ENCODE measurements at regions of chr4 and their contacts with region 1.

Region 1: DNA sequence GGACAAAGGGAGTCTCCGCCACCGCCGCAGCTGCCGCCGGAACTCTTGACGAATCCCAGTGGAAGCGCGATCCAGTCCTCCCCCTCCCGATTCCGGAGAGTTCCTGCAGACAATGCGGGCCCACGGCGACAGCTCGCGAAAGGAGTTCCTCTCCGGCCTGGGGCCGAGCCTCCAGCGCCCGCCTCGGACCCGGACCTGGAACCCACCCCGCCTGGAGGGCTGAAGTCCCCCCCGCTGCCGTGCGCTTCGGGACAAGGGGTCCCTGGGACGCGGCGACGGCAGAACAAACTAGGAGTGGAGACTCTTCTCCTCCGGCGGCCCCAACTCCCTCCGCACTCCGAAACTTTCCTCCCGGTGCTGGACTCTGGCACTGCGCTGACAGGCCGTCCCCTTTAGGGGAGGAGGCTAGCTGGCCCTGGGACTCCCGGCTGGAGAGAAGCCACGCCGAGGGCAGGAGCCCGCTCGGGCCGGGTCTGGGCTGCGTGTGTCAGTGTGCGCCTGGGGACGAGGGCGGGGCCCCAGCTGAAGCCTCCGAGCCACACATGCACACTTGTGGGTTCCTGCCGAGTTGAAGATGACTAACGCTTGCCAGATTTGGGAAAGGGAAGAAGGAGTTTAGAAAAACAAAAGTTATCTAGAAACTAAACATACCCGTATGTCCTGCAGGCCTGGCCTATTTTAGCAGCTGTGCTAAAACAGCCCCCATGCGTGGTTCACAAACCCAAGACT is at the start of gene ANTXR2:
- DNase-seq: peak; percentile 79
- H3K4me3 Mint-ChIP-seq: peak within 1 kb of the TSS; percentile 88
- H3K27ac Mint-ChIP-seq: peak within 1 kb of the TSS; percentile 81
- H3K4me1 Mint-ChIP-seq: peaks cover 72% of the 10 kb centered on the region
- H3K27me3 Mint-ChIP-seq: no peaks in the 10 kb centered on the region
- total RNA-seq, gene ANTXR2: 12.6 to 14.4 TPM

Region 2: GRCh38 chr4:79528241-79528706 is 544.6 kb before region 1 on chr4:
- CTCF ChIA-PET with region 1: no interaction called
- POLR2A ChIA-PET with region 1: no interaction called
- intact Hi-C with region 1: loop called (anchors 10 kb)
- DNase-seq: peak; percentile 9
- H3K4me3 Mint-ChIP-seq: no peak overlapping the region
- H3K27ac Mint-ChIP-seq: no peak overlapping the region
- H3K4me1 Mint-ChIP-seq: peaks cover 7% of the 10 kb centered on the region
- H3K27me3 Mint-ChIP-seq: peaks cover 6% of the 10 kb centered on the region

Region 3: GRCh38 chr4:80007745-80008149 is 65.2 kb before region 1 on chr4:
- CTCF ChIA-PET with region 1: interaction called, 3 read pairs
- POLR2A ChIA-PET with region 1: interaction called, 6 read pairs
- intact Hi-C with region 1: loop called (anchors 1 kb)
- DNase-seq: no peak
- H3K4me3 Mint-ChIP-seq: peak overlapping the region; percentile 20
- H3K27ac Mint-ChIP-seq: peak overlapping the region; percentile 87
- H3K4me1 Mint-ChIP-seq: peaks cover 64% of the 10 kb centered on the region
- H3K27me3 Mint-ChIP-seq: no peaks in the 10 kb centered on the region

Region 4: GRCh38 chr4:80125252-80126177 is 52.6 kb after region 1 on chr4:
- CTCF ChIA-PET with region 1: interaction called, 7 read pairs
- POLR2A ChIA-PET with region 1: interaction called, 9 read pairs
- intact Hi-C with region 1: loop called (anchors 1 kb)
- DNase-seq: peak; percentile 31
- H3K4me3 Mint-ChIP-seq: peak overlapping the region; percentile 28
- H3K27ac Mint-ChIP-seq: peak overlapping the region; percentile 70
- H3K4me1 Mint-ChIP-seq: peaks cover 49% of the 10 kb centered on the region
- H3K27me3 Mint-ChIP-seq: no peaks in the 10 kb centered on the region

Region 5: GRCh38 chr4:80173401-80173800 is 100.5 kb after region 1 on chr4:
- CTCF ChIA-PET with region 1: interaction called, 7 read pairs
- POLR2A ChIA-PET with region 1: interaction called, 9 read pairs
- intact Hi-C with region 1: loop called (anchors 1 kb)
- DNase-seq: peak; percentile 71
- H3K4me3 Mint-ChIP-seq: peak overlapping the region; percentile 18
- H3K27ac Mint-ChIP-seq: peak overlapping the region; percentile 81
- H3K4me1 Mint-ChIP-seq: peaks cover 55% of the 10 kb centered on the region
- H3K27me3 Mint-ChIP-seq: no peaks in the 10 kb centered on the region

Region 6: DNA sequence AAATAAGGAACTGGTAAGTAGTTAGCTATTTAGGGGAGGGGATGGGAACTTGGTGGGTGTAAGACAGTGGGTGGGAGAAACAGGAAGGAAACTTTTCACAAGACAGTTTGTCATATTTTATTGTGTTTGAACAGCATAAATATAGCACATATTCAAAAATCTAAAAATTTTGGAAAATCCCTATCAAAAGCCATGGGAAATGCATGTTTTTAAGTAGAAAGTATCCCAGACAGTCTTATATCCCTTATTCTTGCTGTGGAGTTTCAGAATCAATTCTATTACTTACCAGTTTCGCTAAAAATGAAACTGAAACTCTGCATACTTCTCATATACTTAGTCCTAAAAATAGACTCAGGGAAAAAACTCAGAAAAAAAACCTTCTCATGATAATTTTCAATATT is 1421.1 kb after region 1 on chr4:
- CTCF ChIA-PET with region 1: no interaction called
- POLR2A ChIA-PET with region 1: no interaction called
- intact Hi-C with region 1: loop called (anchors 10 kb)
- DNase-seq: no peak
- H3K4me3 Mint-ChIP-seq: no peak overlapping the region
- H3K27ac Mint-ChIP-seq: peak overlapping the region; percentile 64
- H3K4me1 Mint-ChIP-seq: peaks cover 47% of the 10 kb centered on the region
- H3K27me3 Mint-ChIP-seq: no peaks in the 10 kb centered on the region

Measured in activated CD4-positive, alpha-beta memory T cell treated with anti-CD3 and anti-CD28 coated beads for 36 hours (primary cell).